ENCODE measurements at regions of chr13 and their contacts with region 1.

Region 1: GRCh38 chr13:106117035-106117434 is 418.4 kb downstream of the EFNB2 start:
- DNase-seq: peak in 1 of 2 experiments; percentile 69
- H3K4me3 ChIP-seq: peak overlapping the region; percentile 7; the same call in 1 of the 2 replicates
- H3K27ac ChIP-seq: peak overlapping the region; percentile 38
- H3K4me1 ChIP-seq: peaks cover 30% of the 10 kb centered on the region
- H3K27me3 ChIP-seq: no peaks in the 10 kb centered on the region
- CTCF ChIP-seq: no peak

Region 2: GRCh38 chr13:106143930-106144709 is 27.1 kb after region 1 on chr13:
- CTCF ChIA-PET with region 1: no interaction called
- POLR2A ChIA-PET with region 1: interaction called, 7 read pairs
- intact Hi-C with region 1: loop called (anchors 1 kb)
- DNase-seq: peak; percentile 44 to 99
- H3K4me3 ChIP-seq: no peak overlapping the region
- H3K27ac ChIP-seq: peak overlapping the region; percentile 85
- H3K4me1 ChIP-seq: peaks cover 28% of the 10 kb centered on the region
- H3K27me3 ChIP-seq: no peaks in the 10 kb centered on the region
- CTCF ChIP-seq: no peak

Region 3: DNA sequence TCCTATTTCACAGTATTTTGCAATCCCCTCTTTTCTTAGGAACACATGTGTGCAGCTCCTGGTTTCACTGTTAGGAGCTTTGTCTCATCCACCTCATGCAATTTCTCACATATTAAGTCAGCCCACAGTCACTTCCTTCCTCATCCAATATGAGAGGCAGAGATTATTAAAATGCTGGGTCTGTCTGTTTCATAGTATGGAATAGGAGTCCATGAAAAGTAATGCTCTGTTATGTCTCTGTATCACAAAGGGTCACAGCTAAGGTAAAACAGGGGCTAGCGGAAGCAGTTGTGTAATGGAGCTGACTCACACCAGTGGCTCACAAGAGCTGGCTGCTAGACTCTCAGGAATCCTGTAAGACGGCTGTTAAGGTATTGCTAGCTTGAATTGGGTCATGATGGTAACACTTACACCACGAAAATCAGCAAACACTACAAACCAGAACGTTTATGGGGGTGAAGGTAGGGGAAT is 201.9 kb after region 1 on chr13:
- CTCF ChIA-PET with region 1: no interaction called
- POLR2A ChIA-PET with region 1: interaction called, 10 read pairs
- intact Hi-C with region 1: no loop called
- DNase-seq: peak; percentile 72 to 98
- H3K4me3 ChIP-seq: peak overlapping the region; percentile 24; the same call in 1 of the 2 replicates
- H3K27ac ChIP-seq: peak overlapping the region; percentile 96
- H3K4me1 ChIP-seq: peaks cover 27% of the 10 kb centered on the region
- H3K27me3 ChIP-seq: no peaks in the 10 kb centered on the region
- CTCF ChIP-seq: no peak